Body of pancreas (tissue), 4 donors: ENCODE measurements at regions of chr3 and their contacts with region 1.

Region 1: GRCh38 chr3:101195951-101196713 is 124.2 kb downstream of the IMPG2 start:
- DNase-seq: no peak
- ATAC-seq: peak; percentile 67
- H3K4me3 ChIP-seq: no peak overlapping the region
- H3K27ac ChIP-seq: no peak overlapping the region
- H3K4me1 ChIP-seq: no peaks in the 10 kb centered on the region
- H3K27me3 ChIP-seq: no peaks in the 10 kb centered on the region
- CTCF ChIP-seq: peak in 6 of 7 experiments; percentile 29 to 65 (median 53)
- POLR2A ChIP-seq: no peak

Region 2: DNA sequence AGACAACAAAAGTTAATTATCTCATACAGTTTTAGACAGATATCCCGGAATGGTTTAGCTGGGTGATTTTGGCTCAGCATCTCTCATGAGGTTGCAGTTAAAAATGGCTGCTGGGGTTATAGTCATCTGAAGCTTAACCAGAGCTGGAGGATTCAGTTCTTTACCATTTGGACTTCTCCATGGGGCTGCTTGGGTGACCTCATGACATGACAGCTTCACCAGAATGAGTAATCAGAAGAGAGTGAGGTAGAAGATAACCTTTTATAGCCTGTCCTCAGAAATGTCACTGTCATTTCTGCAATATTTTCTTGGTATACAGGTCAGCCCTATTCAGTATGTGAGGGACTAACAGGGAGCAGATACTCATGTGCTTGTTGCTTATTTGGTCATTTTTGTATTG is 455.9 kb before region 1 on chr3:
- intact Hi-C with region 1: loop called (anchors 10 kb)
- DNase-seq: no peak
- ATAC-seq: no peak
- H3K4me3 ChIP-seq: no peak overlapping the region
- H3K27ac ChIP-seq: no peak overlapping the region
- H3K4me1 ChIP-seq: no peaks in the 10 kb centered on the region
- H3K27me3 ChIP-seq: no peaks in the 10 kb centered on the region
- CTCF ChIP-seq: no peak
- POLR2A ChIP-seq: no peak

Region 3: DNA sequence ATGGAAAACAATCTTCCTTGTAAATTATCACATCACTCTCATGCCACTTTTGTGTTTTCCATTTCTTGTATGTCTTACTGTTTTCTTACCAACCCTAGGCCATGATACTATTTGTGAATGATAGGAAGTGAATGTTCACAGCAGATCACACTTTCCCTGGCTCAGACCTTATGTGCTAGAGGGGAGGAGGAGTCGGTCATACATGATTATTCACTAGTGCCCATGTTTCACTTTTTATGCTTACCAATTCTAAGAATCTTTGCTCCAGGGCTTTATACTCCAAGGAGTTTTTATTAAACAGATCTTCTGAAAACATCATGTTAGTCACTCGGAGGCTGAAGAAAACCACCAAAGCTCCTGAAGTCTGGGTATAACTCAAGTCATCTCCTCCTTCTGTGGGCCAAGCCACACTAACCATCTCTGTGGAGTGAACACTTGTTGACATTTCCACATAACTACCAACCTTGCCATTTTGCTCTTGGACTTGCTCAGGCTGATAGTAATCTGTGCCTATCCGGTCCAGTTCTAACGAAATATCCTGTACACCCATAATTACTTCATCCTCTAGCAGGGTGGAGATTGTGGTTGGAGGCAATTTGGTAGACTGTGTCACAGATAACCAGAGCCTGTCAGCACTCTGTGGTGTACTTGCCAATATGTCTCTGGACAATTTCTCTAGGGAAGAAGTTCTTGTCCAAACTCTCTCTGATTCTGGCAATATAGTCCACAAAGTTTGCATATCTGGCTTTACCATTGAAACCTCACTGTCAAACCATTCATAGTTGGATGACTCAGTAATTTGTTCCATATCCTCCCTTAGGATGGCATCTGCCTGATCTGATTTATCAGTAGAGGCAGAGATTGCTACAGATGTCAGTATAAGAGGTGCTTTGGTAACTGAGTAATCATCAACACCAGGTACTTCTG is 47.4 kb after region 1 on chr3:
- intact Hi-C with region 1: no loop called
- DNase-seq: no peak
- ATAC-seq: no peak
- H3K4me3 ChIP-seq: no peak overlapping the region
- H3K27ac ChIP-seq: no peak overlapping the region
- H3K4me1 ChIP-seq: no peaks in the 10 kb centered on the region
- H3K27me3 ChIP-seq: no peaks in the 10 kb centered on the region
- CTCF ChIP-seq: no peak
- POLR2A ChIP-seq: no peak

Region 4: DNA sequence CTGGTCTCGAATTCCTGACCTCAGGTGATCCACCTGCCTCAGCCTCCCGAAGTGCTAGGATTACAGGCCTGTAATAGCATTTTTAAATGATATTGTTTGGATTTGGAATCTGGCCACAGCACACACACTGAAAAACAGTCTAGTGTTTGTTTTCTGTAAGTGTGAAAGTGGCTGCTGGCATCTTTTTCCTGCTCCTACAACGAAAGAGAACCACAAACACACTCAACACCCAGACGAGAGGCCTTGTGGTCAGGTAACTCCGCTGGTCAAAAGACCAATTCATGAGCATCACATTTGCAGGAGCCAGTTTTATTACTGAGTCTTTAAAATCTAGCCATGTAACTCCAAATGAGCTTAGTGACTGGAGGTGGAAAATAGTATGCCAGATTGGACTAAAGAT is 74.0 kb after region 1 on chr3:
- intact Hi-C with region 1: no loop called
- DNase-seq: no peak
- ATAC-seq: no peak
- H3K4me3 ChIP-seq: no peak overlapping the region
- H3K27ac ChIP-seq: no peak overlapping the region
- H3K4me1 ChIP-seq: no peaks in the 10 kb centered on the region
- H3K27me3 ChIP-seq: no peaks in the 10 kb centered on the region
- CTCF ChIP-seq: no peak
- POLR2A ChIP-seq: no peak

Region 5: DNA sequence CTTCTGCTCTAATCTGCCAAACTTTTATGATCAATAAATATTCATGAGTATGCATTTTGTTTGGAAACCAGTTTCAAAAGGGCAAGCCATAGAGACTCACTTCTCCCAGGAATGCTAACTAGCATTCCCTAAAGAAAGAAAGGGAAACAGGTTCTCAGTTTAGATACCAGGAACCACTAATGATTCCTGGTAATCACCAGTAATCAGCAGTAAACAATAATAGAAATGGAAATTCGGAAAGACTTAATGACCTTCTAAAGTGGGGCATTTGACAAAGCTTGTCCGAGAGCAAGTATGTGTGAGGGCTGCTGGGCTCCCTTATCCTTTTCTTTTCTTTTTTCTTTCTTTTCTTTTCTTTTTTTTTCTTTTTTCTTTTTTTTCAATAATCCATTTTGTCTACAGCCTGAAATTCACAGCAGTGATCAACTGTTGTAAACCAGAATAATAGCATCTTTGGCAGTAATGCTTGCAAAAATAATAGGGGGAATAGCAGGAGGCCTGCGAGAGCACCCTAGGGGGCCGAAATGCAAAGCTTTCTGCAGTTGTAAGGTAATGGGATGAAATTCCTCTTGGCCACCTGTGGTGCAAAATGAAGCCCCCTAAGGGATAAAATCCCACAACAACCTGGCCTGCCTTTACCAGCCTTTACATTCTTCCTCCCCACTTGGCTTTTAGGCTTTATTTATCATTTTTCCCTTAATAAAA is 1491.9 kb after region 1 on chr3:
- intact Hi-C with region 1: no loop called
- DNase-seq: no peak
- ATAC-seq: no peak
- H3K4me3 ChIP-seq: no peak overlapping the region
- H3K27ac ChIP-seq: no peak overlapping the region
- H3K4me1 ChIP-seq: no peaks in the 10 kb centered on the region
- H3K27me3 ChIP-seq: no peaks in the 10 kb centered on the region
- CTCF ChIP-seq: no peak
- POLR2A ChIP-seq: no peak